K562 (cell line): ENCODE measurements at regions of chr1 and their contacts with region 1.

Region 1: GRCh38 chr1:226062558-226063223 is at the start of gene H3-3A:
- DNase-seq: peak; percentile 98 to 99 (median 98)
- ATAC-seq: peak; percentile 86
- H3K4me3 ChIP-seq: peak within 1 kb of the TSS; percentile 94
- H3K27ac ChIP-seq: peak within 1 kb of the TSS; percentile 97
- H3K4me1 ChIP-seq: peaks cover 7 to 24% of the 10 kb centered on the region in 2 experiments
- H3K27me3 ChIP-seq: no peaks in the 10 kb centered on the region
- CTCF ChIP-seq: peak in 1 of 3 experiments; percentile 23; a peak in 2 of 6 replicates
- EP300 ChIP-seq: no peak
- POLR2A ChIP-seq: peak; percentile 97
- RAD21 ChIP-seq: peak; percentile 13 to 41; a peak in 1 of 4 replicates
- polyA plus RNA-seq, gene H3-3A: 543 to 591 TPM

Region 2: DNA sequence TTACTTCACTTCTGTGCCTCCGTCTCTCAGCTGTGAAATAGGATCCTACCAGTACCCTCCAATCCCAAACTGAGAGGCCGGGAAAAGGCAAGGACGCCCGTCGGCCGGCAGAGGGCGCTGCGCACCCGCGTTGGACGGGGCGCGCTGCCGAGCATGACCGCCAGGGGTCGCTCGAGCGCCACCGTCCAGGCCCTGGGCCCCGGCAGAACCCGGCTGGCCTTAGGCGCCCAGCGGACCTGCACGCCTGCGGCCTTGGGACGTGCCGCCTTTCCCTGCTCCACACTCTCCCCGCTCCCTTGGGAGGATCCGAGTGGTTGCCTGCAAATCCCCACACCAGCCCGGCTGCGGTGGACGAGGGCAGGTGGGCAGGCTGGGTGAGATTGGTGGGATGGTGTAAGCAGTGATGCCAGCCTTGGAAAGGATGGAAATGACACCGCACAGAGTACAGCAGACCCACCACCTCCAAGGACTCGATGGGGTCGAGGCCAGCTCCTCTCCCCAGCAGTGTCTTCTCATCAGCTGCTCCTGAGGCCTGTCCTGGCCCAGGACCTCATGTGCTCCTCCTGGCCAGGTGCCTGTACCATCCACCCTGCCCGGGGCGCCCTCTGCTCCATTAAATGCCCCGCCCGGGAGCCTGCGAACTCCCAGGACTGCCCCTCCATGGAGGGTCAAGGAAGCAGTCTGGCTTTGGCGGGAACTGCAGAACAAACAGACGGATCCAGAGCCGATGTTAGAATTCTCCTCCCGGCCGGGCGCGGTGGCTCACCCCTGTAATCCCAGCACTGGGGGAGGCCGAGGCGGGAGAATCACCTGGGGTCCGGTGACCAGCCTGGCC is 587.5 kb before region 1 on chr1:
- CTCF ChIA-PET with region 1: interaction called, 5 read pairs
- POLR2A ChIA-PET with region 1: no interaction called
- in situ Hi-C with region 1: no loop called
- intact Hi-C with region 1: loop called (anchors 1 kb)
- DNase-seq: peak; percentile 81 to 94 (median 91)
- ATAC-seq: peak; percentile 90
- H3K4me3 ChIP-seq: no peak overlapping the region
- H3K27ac ChIP-seq: no peak overlapping the region
- H3K4me1 ChIP-seq: peaks cover 0 to 16% of the 10 kb centered on the region in 2 experiments; a peak in 3 of 5 replicates
- H3K27me3 ChIP-seq: peaks cover 15 to 34% of the 10 kb centered on the region in 2 experiments; a peak in 4 of 5 replicates
- CTCF ChIP-seq: peak; percentile 100
- EP300 ChIP-seq: no peak
- POLR2A ChIP-seq: no peak
- RAD21 ChIP-seq: peak; percentile 100

Region 3: GRCh38 chr1:225923692-225924555 is 138.8 kb before region 1 on chr1 and contains the start of gene PYCR2:
- CTCF ChIA-PET with region 1: no interaction called
- POLR2A ChIA-PET with region 1: no interaction called
- in situ Hi-C with region 1: no loop called
- intact Hi-C with region 1: loop called (anchors 5 kb)
- DNase-seq: peak; percentile 99 to 100 (median 99)
- ATAC-seq: peak; percentile 91
- H3K4me3 ChIP-seq: peak within 1 kb of the TSS; percentile 94
- H3K27ac ChIP-seq: peak within 1 kb of the TSS; percentile 93
- H3K4me1 ChIP-seq: peaks cover 44 to 69% of the 10 kb centered on the region in 2 experiments
- H3K27me3 ChIP-seq: no peaks in the 10 kb centered on the region
- CTCF ChIP-seq: peak; percentile 5 to 19 (median 10); a peak in 2 of 6 replicates
- EP300 ChIP-seq: peak; percentile 41
- POLR2A ChIP-seq: peak; percentile 97
- RAD21 ChIP-seq: peak in 1 of 2 experiments; percentile 16; a peak in 2 of 4 replicates
- polyA plus RNA-seq, gene PYCR2: 5.5 to 7.9 TPM

Region 4: DNA sequence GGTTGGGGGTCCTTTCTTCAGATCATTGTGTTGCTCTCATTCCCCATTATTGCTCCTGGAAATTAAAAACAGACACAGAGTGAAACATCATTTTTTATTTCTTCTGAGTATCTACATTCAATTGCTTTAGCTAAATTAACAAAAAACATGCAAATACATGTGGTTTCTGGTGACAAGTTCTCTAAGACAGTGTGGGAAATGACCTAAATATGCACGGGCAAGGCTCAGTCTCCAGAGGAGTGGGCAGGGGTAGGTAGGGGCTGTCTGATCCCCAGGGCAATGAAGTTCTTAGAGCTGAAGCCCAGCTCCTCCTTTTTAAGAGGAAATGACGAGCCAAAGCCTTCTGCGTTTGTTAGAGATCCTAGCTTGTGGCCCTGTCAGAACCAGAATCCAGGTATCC is 126.2 kb before region 1 on chr1:
- CTCF ChIA-PET with region 1: no interaction called
- POLR2A ChIA-PET with region 1: no interaction called
- in situ Hi-C with region 1: no loop called
- intact Hi-C with region 1: no loop called
- DNase-seq: peak in 2 of 4 experiments; percentile 8 to 10
- ATAC-seq: no peak
- H3K4me3 ChIP-seq: no peak overlapping the region
- H3K27ac ChIP-seq: no peak overlapping the region
- H3K4me1 ChIP-seq: peaks cover 8 to 19% of the 10 kb centered on the region in 2 experiments; a peak in 4 of 5 replicates
- H3K27me3 ChIP-seq: no peaks in the 10 kb centered on the region
- CTCF ChIP-seq: no peak
- EP300 ChIP-seq: no peak
- POLR2A ChIP-seq: no peak
- RAD21 ChIP-seq: no peak

Region 5: DNA sequence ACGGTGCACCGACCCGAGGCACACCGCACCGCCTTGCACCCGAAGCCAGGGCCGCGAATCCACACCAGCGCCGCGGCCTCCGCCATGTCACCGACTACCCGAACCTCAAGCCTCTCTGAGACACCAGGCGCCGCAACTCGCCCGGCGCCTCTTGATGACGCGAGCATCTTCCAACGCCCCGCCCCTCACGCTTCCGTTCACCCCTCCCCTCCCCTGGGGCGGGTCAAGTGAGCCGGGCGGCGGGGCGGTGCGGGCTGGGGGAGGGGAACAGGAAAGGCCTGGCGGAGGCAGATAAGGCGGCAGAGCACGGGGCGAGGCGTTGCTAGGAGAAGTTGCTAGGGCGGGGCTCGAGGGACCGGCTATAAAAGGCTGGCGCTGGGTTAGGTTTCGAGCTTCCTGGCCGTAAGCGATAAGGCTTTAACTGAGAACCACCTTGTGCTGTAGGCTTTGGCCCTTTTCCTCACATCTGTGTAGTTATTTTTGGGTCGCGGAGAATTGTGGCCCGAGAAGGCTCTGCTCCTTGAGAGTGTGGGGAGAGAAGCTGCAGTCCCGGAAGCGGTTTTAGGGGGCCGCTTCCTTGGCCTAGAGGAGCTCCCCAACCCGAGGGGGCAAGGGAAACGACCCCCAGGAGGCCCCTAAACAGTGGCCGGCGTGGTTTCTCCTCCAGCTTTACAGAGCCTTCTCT is 63.3 kb before region 1 on chr1 and contains the start of gene SDE2:
- CTCF ChIA-PET with region 1: interaction called, 11 read pairs
- POLR2A ChIA-PET with region 1: interaction called, 100 read pairs
- in situ Hi-C with region 1: no loop called
- intact Hi-C with region 1: loop called (anchors 1 kb)
- DNase-seq: peak; percentile 98 to 100 (median 98)
- ATAC-seq: peak; percentile 63
- H3K4me3 ChIP-seq: peak within 1 kb of the TSS; percentile 78
- H3K27ac ChIP-seq: peak within 1 kb of the TSS; percentile 98
- H3K4me1 ChIP-seq: peaks cover 36 to 68% of the 10 kb centered on the region in 2 experiments
- H3K27me3 ChIP-seq: no peaks in the 10 kb centered on the region
- CTCF ChIP-seq: 0 out of 6 replicates have a peak, but pooled peaks of 1 of the 3 experiments have one; percentile 1
- EP300 ChIP-seq: peak; percentile 96
- POLR2A ChIP-seq: peak; percentile 99
- RAD21 ChIP-seq: peak in 1 of 2 experiments; percentile 31
- polyA plus RNA-seq, gene SDE2: 14.3 to 19.3 TPM

Region 6: GRCh38 chr1:226083302-226084101 is 20.8 kb after region 1 on chr1:
- CTCF ChIA-PET with region 1: no interaction called
- POLR2A ChIA-PET with region 1: interaction called, 49 read pairs
- in situ Hi-C with region 1: no loop called
- intact Hi-C with region 1: no loop called
- DNase-seq: peak; percentile 95 to 100 (median 98)
- ATAC-seq: peak; percentile 95
- H3K4me3 ChIP-seq: peak overlapping the region; percentile 47
- H3K27ac ChIP-seq: peak overlapping the region; percentile 58
- H3K4me1 ChIP-seq: peaks cover 4 to 15% of the 10 kb centered on the region in 2 experiments; a peak in 4 of 5 replicates
- H3K27me3 ChIP-seq: no peaks in the 10 kb centered on the region
- CTCF ChIP-seq: no peak; a peak in 1 of 6 replicates
- EP300 ChIP-seq: no peak
- POLR2A ChIP-seq: peak; percentile 74
- RAD21 ChIP-seq: no peak

Region 7: GRCh38 chr1:226109829-226110248 is 47.1 kb after region 1 on chr1:
- CTCF ChIA-PET with region 1: interaction called, 3 read pairs
- POLR2A ChIA-PET with region 1: interaction called, 3 read pairs
- in situ Hi-C with region 1: no loop called
- intact Hi-C with region 1: loop called (anchors 2 kb)
- DNase-seq: peak; percentile 93 to 99 (median 97)
- ATAC-seq: peak; percentile 77
- H3K4me3 ChIP-seq: peak overlapping the region; percentile 57
- H3K27ac ChIP-seq: peak overlapping the region; percentile 85
- H3K4me1 ChIP-seq: peaks cover 42 to 47% of the 10 kb centered on the region in 2 experiments
- H3K27me3 ChIP-seq: no peaks in the 10 kb centered on the region
- CTCF ChIP-seq: peak in 2 of 3 experiments; percentile 20 to 34; a peak in 3 of 6 replicates
- EP300 ChIP-seq: no peak
- POLR2A ChIP-seq: no peak
- RAD21 ChIP-seq: peak in 1 of 2 experiments; percentile 24; a peak in 1 of 4 replicates

Region 8: DNA sequence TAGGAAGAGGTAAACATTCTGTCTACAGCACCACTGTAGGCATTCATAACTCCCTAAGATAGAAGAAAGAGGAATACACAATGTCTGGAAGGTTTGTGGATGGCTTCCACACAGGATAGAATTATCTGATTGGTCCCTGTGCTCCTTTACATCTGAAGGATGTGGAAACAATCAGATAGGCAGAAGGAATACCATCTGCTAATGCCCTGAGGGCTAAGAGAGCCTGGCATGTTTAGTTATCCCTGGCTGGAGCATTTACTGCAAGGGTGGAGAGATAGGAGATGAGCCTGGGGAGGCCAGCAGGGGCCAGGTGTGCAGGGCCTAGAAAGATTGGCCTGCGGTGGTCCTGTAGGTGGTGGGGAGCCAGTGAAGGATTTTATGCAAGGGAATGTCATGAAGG is 132.5 kb after region 1 on chr1:
- CTCF ChIA-PET with region 1: no interaction called
- POLR2A ChIA-PET with region 1: no interaction called
- in situ Hi-C with region 1: no loop called
- intact Hi-C with region 1: loop called (anchors 5 kb)
- DNase-seq: no peak
- ATAC-seq: no peak
- H3K4me3 ChIP-seq: no peak overlapping the region
- H3K27ac ChIP-seq: no peak overlapping the region
- H3K4me1 ChIP-seq: peaks cover 3 to 6% of the 10 kb centered on the region in 2 experiments; a peak in 2 of 5 replicates
- H3K27me3 ChIP-seq: no peaks in the 10 kb centered on the region; a peak in 1 of 5 replicates
- CTCF ChIP-seq: no peak
- EP300 ChIP-seq: no peak
- POLR2A ChIP-seq: no peak
- RAD21 ChIP-seq: no peak